ENCODE measurements at regions of chr11 and their contacts with region 1.

Region 1: GRCh38 chr11:18865951-18866350 is 73.3 kb downstream of the MRGPRX1 start:
- DNase-seq: no peak
- H3K4me3 ChIP-seq: no peak overlapping the region
- H3K27ac ChIP-seq: no peak overlapping the region
- H3K4me1 ChIP-seq: no peaks in the 10 kb centered on the region
- H3K27me3 ChIP-seq: no peaks in the 10 kb centered on the region
- CTCF ChIP-seq: no peak
- EP300 ChIP-seq: no peak
- RAD21 ChIP-seq: no peak

Region 2: DNA sequence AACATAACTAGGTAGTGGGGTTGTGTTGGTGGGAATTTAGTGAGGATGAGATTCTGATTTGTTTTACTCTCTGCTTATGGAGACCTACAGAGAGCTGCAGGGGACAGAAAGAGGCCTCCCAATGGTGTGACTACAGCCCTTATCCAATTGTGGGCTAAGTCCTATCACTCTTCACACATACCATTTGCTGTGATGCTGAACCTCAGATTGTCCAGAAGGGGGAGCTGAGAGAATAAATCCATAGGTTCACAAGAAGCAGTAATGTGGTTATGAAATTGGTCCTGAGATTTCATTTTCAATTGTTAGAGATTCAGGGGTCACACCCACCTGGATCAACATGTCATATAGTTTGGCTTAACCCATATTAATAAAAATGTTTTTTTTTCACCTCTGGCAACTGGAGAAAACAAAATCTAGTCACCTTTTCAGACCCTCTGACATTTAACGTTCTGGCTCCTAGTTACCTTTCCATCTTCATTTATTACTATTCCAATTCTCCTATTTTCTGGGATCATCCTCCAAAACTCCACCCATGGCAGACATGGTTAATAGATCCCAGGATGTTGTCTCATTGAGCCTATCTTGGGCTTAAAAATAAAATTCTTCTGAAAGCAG is 21.1 kb before region 1 on chr11:
- CTCF ChIA-PET with region 1: interaction called, 12 read pairs
- POLR2A ChIA-PET with region 1: no interaction called
- DNase-seq: peak; percentile 40
- H3K4me3 ChIP-seq: no peak overlapping the region; a peak in 1 of 4 replicates
- H3K27ac ChIP-seq: no peak overlapping the region
- H3K4me1 ChIP-seq: no peaks in the 10 kb centered on the region
- H3K27me3 ChIP-seq: no peaks in the 10 kb centered on the region; the same call in 1 of the 2 replicates
- CTCF ChIP-seq: peak; percentile 69
- EP300 ChIP-seq: no peak
- RAD21 ChIP-seq: peak; percentile 63